ENCODE measurements at regions of chr1 and their contacts with region 1.

Region 1: DNA sequence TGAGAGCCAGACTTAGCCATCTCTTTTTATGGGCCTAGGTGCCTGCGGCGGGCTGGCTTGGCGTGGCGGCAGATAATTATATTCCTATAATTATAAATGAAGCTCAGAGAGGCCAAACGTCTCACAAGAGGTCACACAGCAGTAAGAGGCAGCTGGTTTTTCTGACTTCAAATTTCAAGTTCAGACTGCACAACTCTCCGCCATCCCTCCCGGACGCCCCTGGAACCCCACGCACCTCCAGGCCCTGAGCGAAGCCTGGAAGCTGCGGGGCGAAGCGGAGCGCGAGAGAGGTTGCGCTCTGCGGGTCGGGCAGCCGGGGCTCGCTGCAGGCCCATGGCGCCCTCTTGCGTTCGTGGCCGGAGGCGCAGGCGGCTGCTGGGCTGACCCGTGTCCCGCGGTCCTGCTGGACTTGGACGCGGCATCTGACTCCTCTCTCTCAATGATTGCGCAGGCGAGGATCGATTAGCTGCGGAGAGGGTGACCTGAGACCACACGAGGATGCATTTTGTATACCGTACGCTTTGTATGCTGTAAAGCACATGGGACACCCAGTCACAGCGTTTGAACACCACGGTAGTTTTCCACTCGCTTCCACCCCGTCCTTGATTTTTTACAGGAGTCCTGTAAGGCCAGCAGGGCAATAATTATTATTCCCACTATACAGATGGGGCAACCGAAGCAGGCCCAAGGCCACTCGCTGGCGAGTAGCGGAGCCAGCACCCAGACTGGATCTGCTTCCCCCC is 272.7 kb downstream of the FOXD2 start:
- DNase-seq: peak in 9 of 10 donors; percentile 58 to 83 (median 66)
- H3K4me3 ChIP-seq: peak overlapping the region in 41 of 59 donors; percentile 0 to 65 (median 48)
- H3K27ac ChIP-seq: peak overlapping the region in 17 of 59 donors; percentile 3 to 83 (median 66)
- H3K27me3 ChIP-seq: peaks cover 0 to 90% (median 63%) of the 10 kb centered on the region in 45 donors
- CTCF ChIP-seq: peak; percentile 63 to 99 (median 96)

Region 2: GRCh38 chr1:47179017-47179987 is 531.2 kb before region 1 on chr1:
- intact Hi-C with region 1: loop called in 1 of 2 experiments (anchors 5 kb)
- DNase-seq: peak; percentile 51 to 92 (median 84)
- H3K4me3 ChIP-seq: peak overlapping the region in 58 of 59 donors; percentile 22 to 70 (median 50)
- H3K27ac ChIP-seq: peak overlapping the region in 32 of 59 donors; percentile 4 to 85 (median 44)
- H3K27me3 ChIP-seq: peaks cover 0 to 21% (median 0%) of the 10 kb centered on the region in 45 donors
- CTCF ChIP-seq: peak; percentile 67 to 95 (median 86)

Region 3: DNA sequence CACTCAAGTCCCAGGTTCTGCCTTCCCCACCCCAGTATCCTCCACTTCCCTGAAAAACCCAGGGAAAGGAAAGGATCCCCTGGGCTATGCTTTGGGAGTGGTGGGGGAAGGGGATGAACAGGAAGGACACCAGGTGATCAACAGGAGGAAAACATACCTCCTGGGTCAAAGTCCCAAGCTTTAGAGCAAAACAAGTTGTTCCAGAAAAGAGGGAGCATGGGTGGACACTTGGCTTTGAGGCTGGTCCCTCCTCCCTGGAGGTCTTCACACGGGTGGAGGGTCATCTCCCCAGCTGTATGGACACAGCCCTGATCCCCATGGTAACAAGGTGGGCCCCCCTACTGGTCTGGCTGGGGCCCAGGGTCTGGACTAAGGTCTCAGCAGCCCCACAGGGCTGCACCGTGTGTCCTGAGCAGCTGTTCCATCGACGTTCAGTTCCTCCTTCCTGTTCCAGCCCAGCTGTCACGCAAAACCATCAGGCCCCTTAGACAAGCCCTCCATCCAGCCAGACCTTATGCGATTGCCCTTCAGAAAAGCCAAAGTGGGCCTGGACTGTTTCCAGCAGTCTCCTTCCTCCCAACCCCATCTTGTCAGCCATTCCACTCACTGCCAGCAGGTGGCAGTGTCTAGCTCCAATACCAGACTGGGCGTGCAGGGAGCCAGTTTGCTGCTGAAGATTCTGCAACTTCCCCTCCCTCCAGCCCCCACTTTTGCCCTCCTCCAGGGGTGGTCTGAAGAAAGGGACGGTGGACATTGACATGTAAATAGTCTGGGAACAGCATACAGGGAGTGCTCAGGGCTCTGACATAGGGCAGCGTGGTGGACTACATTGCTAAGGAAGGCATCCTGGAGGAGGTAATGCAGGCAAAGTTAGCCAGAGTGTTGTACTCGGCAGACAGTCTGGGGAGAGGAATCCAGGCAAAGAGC is 517.8 kb before region 1 on chr1:
- intact Hi-C with region 1: loop called in 1 of 2 experiments (anchors 5 kb)
- DNase-seq: peak in 8 of 10 donors; percentile 53 to 76 (median 60)
- H3K4me3 ChIP-seq: no peak overlapping the region
- H3K27ac ChIP-seq: no peak overlapping the region
- H3K27me3 ChIP-seq: peaks cover 0 to 17% (median 0%) of the 10 kb centered on the region in 45 donors
- CTCF ChIP-seq: peak; percentile 76 to 97 (median 92)

Region 4: GRCh38 chr1:47388891-47389238 is 321.6 kb before region 1 on chr1:
- intact Hi-C with region 1: loop called in 1 of 2 experiments (anchors 5 kb)
- DNase-seq: peak in 9 of 10 donors; percentile 27 to 75 (median 61)
- H3K4me3 ChIP-seq: no peak overlapping the region
- H3K27ac ChIP-seq: no peak overlapping the region
- H3K27me3 ChIP-seq: no peaks in the 10 kb centered on the region
- CTCF ChIP-seq: peak; percentile 41 to 76 (median 66)

Region 5: DNA sequence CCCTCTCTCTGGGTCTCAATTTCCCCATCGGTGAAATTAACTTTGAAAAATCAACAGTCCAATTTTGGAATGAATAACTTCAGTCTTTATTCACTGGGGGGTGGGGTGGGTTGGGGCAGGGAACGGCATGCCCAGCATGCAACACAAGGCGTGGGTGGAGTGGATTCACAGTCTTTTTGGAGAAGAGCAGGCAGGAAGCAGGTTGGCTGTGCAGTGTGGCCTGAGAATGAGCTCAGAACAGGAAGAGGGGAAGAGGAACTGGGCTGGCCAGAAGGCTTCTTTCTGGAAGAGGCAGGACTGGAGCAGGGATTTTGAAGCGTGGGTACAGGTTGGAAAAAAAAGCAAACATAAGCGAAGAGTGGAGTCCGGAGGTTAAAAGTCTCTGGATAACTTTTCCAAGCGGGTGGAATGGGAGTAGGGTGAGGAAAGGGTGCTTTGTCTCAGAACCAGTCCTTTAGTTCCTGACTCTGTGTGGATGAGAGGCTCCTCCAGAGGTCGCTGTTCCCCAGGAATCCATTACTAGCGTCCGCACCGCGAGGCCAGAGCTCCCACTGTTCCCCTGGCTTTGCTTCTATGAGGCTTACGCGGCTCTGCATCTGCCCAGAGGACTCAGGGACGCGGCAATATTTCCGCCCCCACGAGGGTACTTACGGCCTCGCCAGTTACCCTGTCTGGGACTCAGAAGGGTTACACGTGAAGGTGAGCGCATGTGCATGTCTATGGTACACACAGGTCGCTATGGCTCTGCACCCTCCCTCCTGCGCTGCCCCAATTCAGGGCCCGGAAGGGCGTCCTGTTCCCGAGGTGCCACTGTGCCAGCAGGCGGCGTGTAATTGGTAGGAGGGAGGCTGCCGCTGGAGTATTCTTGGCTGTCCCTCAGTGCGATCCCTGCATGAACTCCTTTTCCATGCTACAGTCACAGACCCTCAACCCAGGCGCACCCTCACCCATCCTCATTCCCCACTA is 278.1 kb before region 1 on chr1:
- intact Hi-C with region 1: loop called (anchors 2 kb)
- DNase-seq: peak in 9 of 10 donors; percentile 48 to 83 (median 71)
- H3K4me3 ChIP-seq: peak overlapping the region in 27 of 59 donors; percentile 0 to 48 (median 28)
- H3K27ac ChIP-seq: no peak overlapping the region
- H3K27me3 ChIP-seq: peaks cover 13 to 100% (median 91%) of the 10 kb centered on the region in 45 donors
- CTCF ChIP-seq: peak; percentile 29 to 88 (median 75)

Region 6: DNA sequence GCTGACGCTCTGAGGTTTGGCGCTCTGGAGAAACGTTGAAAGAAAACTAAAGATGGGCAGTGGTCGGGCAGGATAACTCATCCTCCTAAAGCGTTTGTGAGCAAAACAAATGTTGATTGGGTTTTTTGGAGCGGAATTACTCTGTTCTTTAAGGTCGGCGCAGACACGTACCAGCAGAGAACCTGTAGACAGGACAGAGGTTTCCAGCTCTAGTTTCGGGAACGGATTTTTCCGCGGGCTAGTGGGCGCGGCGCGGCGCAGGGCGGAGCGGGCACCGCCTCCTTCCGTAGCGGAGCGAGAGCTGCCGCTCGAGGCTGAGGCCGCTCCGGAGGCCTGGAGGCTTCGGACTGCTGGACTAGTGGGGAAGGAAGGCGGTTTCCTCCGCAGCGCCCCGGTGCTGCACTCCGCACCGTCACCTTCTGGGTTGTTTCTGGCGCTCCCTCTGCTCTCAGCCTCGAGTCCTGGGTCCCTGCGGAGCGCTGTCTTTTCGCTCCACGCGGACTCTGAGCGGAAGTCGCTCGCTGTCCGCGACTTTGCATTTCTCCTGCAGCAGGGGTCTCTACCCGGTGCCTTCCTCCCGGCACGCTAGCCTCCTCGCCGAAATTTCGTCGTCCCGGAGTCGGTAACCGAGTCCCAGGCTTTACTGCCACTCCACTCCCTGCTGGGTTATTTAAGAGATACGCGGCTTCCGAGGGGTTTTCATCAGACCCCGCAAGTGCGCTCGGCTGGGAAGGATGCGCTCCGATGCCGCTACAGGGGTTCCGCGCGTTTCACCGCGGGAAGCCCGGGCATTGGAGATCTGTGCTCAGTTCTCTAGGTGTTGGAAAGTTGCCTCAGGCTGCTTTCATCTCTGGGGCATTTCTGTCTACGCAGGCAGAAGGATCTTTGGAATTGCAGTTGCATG is 265.7 kb before region 1 on chr1:
- intact Hi-C with region 1: no loop called
- DNase-seq: peak in 1 of 10 donors; percentile 33
- H3K4me3 ChIP-seq: peak overlapping the region in 28 of 59 donors; percentile 1 to 44 (median 19)
- H3K27ac ChIP-seq: peak overlapping the region in 1 of 59 donors; percentile 41
- H3K27me3 ChIP-seq: peaks cover 11 to 100% (median 95%) of the 10 kb centered on the region in 45 donors
- CTCF ChIP-seq: no peak

Region 7: DNA sequence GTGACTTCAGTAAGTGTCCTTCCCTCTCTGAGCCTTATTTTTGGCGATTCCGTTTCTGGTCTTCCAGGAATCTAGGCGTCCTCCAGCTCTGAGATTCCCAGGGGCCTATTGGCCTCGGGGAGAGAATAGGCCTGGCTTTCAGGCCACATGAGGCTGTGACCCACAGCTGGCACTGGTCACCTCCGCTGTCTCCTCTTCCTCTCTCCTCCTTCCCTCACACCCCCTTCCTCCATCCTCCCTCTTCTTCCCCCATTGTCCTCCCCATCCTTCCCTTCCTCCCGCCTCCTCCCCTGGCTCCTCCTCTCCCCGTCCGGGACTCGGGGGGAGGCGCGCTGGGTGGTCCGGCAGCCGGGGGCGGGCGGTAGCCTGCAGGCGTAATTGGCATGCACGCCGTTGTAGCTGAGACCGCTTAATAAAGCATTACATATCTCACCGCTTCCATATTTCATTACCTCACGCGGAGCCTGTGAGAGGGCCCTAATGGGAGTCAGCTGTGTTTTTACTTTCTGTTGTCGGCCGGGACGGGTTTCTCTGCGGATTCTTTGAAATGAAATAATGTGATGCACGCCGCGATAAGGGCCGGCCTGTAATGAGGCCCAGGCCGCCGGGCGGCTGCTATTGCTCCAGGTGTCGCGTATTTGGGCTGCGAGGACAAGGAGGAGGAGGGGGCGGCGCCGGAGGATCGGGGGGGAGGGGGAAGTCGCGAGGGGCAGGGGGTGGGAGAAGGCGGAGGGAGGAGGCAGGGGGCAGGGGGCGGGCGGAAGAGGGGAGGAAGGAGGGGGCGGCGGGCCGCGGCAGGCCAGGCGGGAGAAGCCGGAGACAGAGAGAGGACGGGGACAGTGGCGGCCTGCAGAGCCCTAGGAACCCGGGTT is 177.3 kb before region 1 on chr1:
- intact Hi-C with region 1: loop called (anchors 2 to 10 kb)
- DNase-seq: peak in 2 of 10 donors; percentile 19 to 30
- H3K4me3 ChIP-seq: peak overlapping the region; percentile 30 to 74 (median 55)
- H3K27ac ChIP-seq: peak overlapping the region in 30 of 59 donors; percentile 1 to 73 (median 47)
- H3K27me3 ChIP-seq: peaks cover 0 to 9% (median 0%) of the 10 kb centered on the region in 45 donors
- CTCF ChIP-seq: no peak

Region 8: GRCh38 chr1:47755101-47755990 is 44.8 kb after region 1 on chr1:
- intact Hi-C with region 1: no loop called
- DNase-seq: peak in 2 of 10 donors; percentile 6 to 20
- H3K4me3 ChIP-seq: no peak overlapping the region
- H3K27ac ChIP-seq: no peak overlapping the region
- H3K27me3 ChIP-seq: peaks cover 0 to 18% (median 0%) of the 10 kb centered on the region in 45 donors
- CTCF ChIP-seq: peak in 38 of 56 donors; percentile 8 to 43 (median 23)

Region 9: GRCh38 chr1:47823040-47823808 is 112.7 kb after region 1 on chr1:
- intact Hi-C with region 1: no loop called
- DNase-seq: no peak
- H3K4me3 ChIP-seq: no peak overlapping the region
- H3K27ac ChIP-seq: no peak overlapping the region
- H3K27me3 ChIP-seq: no peaks in the 10 kb centered on the region
- CTCF ChIP-seq: no peak

Region 10: DNA sequence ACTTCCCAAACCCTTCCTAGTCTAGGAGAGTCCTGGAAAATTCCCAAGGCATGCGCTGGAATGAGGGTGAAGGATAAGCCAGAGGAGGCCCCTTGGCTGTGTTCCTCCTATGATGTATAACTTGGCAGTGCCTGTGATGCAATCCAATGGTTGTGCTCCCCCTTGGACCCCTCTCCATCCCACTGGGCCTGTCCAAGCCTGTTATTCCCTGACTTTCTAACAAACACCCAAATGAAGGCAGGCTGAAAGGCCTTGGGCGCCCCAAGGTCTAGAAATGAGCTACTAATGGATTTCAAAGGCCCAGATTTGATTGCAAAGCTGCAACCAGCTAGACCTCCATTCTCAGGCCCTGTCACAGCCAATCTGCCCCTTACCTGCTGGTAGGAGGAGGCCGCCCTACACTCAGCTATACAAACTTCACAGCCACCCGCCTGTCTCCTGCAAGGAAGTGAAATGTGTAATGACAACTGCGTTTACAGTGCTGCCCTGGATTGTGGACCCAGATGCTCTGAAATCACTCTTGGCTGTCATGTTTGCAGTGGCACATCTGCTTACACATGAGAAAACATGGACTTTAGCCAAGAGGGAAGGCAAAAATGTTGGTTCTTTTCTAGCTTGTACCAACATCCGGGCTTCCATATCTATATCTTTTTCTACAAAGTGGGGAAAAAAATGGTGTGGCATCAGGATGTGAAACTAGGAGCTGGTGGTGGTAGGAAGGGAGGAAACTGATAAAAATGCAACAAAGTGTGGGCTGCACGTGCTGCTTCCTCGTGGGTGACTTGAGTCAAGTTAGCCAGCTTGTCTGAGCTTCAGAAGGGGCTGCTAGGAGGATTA is 156.3 kb after region 1 on chr1:
- intact Hi-C with region 1: no loop called
- DNase-seq: no peak
- H3K4me3 ChIP-seq: no peak overlapping the region
- H3K27ac ChIP-seq: no peak overlapping the region
- H3K27me3 ChIP-seq: peaks cover 0 to 4% (median 0%) of the 10 kb centered on the region in 45 donors
- CTCF ChIP-seq: no peak